K562 (cell line): ENCODE measurements at regions of chr2 and their contacts with region 1.

Region 1: GRCh38 chr2:137865954-137866540 is 98.2 kb upstream of the HNMT start:
- DNase-seq: peak; percentile 45 to 68 (median 52)
- ATAC-seq: peak; percentile 93
- H3K4me3 ChIP-seq: no peak overlapping the region
- H3K27ac ChIP-seq: no peak overlapping the region
- H3K4me1 ChIP-seq: no peaks in the 10 kb centered on the region
- H3K27me3 ChIP-seq: no peaks in the 10 kb centered on the region
- CTCF ChIP-seq: peak; percentile 68 to 81 (median 74)
- EP300 ChIP-seq: no peak
- POLR2A ChIP-seq: no peak
- RAD21 ChIP-seq: peak; percentile 58 to 87

Region 2: GRCh38 chr2:137847443-137847842 is 18.6 kb before region 1 on chr2:
- CTCF ChIA-PET with region 1: no interaction called
- POLR2A ChIA-PET with region 1: no interaction called
- in situ Hi-C with region 1: no loop called
- intact Hi-C with region 1: no loop called
- DNase-seq: no peak
- ATAC-seq: no peak
- H3K4me3 ChIP-seq: no peak overlapping the region
- H3K27ac ChIP-seq: no peak overlapping the region
- H3K4me1 ChIP-seq: no peaks in the 10 kb centered on the region
- H3K27me3 ChIP-seq: no peaks in the 10 kb centered on the region
- CTCF ChIP-seq: no peak
- EP300 ChIP-seq: no peak
- POLR2A ChIP-seq: no peak
- RAD21 ChIP-seq: no peak

Region 3: DNA sequence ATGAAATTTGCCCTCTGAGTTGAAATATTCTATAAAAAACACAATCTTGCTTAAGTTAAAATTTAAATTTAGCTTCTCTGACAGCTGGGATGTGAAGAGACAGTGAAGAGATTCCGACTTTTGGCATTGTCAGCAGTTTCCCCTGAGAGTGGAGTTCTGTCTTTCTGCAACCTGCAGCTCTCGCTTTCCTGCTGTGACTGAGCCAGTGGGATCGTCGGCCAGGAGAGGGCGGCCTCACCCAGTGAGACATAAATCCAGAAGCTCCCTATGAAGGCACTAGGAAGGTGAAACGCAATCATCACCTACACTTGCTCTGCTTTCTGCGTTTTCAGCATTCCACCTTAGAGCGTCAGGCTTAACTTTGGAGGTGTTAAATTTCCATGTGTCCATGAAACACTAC is 22.8 kb after region 1 on chr2:
- CTCF ChIA-PET with region 1: no interaction called
- POLR2A ChIA-PET with region 1: no interaction called
- in situ Hi-C with region 1: no loop called
- intact Hi-C with region 1: loop called (anchors 1 kb)
- DNase-seq: peak in 2 of 4 experiments; percentile 21 to 46
- ATAC-seq: 0 out of 3 replicates have a peak, but pooled peaks have one; percentile 33
- H3K4me3 ChIP-seq: no peak overlapping the region
- H3K27ac ChIP-seq: no peak overlapping the region
- H3K4me1 ChIP-seq: no peaks in the 10 kb centered on the region
- H3K27me3 ChIP-seq: no peaks in the 10 kb centered on the region
- CTCF ChIP-seq: peak; percentile 38 to 71 (median 53)
- EP300 ChIP-seq: no peak
- POLR2A ChIP-seq: no peak
- RAD21 ChIP-seq: peak in 1 of 2 experiments; percentile 60; a peak in 3 of 4 replicates